ENCODE measurements at regions of chr14 and their contacts with region 1.

Region 1: DNA sequence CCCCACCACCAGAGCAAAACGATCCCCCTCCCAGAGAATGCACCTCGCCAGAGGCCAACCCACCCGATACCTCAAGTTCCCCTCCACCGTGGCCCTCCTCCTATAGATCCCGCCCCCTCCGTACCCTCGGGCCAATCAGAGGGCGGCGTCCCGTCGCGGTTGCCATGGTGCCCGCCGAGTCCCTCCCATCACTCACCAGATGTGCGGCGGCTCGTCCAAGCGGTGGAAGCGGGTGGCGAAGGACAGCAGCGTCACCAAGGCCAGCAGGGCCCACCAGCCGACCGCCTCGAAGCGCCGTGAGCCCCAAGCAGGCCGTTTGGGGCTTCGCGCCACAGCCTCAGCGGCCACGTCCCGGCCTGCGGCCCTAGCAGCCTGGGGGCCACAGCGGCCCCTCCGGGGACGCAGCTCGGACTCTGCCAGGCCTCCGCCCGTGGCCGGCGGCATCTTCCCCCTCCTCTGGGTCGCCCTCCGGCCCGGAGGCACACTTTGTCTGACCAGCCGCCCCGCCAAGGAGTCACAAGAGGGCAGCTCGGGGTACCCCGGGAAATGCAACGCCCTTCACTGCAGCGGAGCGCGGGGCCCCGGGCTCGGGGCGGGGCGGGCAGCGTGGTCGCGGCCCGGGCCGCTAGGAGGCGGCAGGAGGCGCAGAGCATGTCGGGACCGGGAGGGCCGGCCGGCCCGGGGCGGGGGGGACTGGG is at the start of gene POMT2:
- DNase-seq: peak; percentile 96
- ATAC-seq: peak; percentile 87 to 89
- total RNA-seq, gene POMT2: 20.8 to 25.5 TPM

Region 2: DNA sequence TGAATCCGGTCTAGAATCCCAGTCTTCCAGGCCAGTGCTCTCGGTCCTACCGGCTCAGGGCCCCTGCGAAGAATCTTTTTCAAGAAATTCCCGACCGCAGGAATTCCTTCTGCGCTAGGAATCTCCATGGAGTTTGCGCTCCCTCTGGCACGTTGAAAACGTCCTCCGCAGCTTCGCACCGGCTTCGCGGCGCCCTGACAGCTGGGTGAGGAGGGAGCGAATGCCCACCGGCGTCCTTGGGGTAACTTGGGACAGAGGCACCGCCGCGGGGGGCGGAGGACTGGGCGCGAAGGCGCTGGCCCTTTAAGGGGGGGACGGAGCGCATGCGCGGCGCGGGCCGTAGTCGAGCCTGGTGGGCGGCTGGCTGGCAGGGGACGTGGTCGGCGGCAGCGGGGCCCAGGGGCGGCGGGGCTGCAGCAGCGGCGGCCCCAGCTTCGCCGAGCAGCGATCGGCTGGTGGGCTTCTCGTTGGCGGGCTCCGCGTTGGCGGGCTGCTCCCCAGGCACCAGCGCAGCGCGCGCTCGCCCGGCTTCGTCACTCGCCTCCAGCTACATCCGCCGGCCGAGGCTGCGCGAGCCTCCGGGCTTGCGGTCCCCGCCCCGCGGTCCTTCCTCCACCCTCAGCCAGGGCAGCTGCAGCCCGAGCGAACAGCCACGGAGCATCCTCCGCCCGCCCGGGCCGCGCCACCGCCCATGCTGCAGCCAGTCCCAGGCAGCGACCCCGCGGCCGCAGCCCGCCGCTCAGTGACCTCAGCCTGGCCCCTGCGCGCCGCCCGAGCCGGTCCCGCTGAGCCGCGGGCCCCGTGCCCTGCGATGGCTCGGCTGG is 559.0 kb before region 1 on chr14 and contains the start of gene VASH1:
- intact Hi-C with region 1: no loop called
- DNase-seq: peak; percentile 87
- ATAC-seq: peak; percentile 76 to 79
- total RNA-seq, gene VASH1: 27.0 to 142 TPM

Region 3: DNA sequence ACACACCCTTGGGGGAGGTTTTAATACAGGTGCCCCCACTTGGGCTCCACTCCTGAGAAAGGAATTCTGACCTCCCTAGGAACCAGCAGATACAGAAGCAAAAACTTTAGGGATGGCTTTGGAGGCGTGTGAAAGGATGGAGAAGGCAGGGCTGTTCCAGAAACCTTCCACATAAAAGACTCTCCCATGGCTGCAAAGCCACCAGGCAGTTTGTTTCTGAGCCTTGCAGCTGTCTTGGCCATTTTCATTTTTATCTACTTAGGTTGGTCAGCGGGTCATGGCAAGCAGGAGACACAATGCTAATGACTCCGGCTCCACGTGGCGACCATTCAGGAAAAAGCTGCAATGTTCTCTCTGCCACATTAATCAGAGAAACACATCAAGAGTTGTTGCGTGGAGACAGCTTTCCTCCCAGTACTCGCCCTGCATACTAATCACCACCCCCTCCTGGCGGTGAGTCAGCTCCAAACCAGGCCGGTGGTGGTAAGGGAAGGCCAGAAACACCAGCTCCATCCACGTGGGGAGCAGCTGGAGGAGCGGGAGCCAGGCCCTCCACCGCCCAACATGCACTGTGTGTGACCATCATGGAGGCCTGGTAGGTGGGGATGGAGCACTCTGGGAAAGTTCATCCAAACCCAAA is 261.0 kb before region 1 on chr14:
- intact Hi-C with region 1: no loop called
- DNase-seq: no peak
- ATAC-seq: peak; percentile 46 to 74

Region 4: DNA sequence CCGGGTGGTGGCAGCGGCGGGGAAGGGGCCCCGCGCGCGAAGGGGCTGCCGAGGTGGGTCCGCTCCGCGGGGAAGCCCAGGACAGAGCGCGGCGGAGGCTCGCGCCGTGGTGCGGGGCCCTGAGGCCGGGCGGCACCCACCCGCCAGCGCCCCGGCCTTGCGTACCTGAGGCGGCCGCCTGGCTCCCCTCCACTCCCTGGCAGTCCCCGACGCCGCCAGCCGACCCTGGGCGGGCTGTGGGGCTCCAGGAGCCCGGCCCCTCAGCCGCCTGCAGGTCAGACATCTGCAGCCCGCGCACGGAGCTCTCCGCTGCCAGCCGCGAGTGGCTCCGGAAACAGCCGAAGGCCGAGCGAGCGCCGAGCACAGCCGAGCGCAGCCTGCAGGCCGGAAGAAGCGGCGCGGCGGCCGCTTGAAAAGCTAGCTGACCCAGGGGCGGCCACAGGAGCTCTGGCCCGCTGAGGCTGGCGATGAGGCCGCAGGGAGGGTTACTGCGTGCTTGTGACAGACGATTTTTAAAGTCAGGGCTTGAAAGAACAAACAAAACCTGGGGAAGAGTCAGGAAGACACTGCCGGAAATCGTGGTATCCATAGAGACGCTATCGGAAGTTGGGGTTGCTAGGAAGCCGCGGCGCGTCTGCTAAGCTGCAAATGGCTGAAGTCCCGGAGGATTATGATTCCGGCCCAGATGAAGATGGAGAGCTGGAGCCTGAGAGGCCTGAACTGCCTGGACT is 56.5 kb after region 1 on chr14 and contains the starts of genes SAMD15 and TMED8:
- intact Hi-C with region 1: loop called in 1 of 2 experiments (anchors 2 kb)
- DNase-seq: peak; percentile 88
- ATAC-seq: peak; percentile 99
- total RNA-seq, gene SAMD15: 0.52 TPM in 1 of 2 donors, not detected in the other
- total RNA-seq, gene TMED8: 5.9 to 6.7 TPM